ENCODE measurements at regions of chr1 and their contacts with region 1.

Region 1: GRCh38 chr1:115138968-115139367 is 49.7 kb upstream of the TSPAN2 start:
- DNase-seq: peak; percentile 66
- H3K4me3 ChIP-seq: no peak overlapping the region
- H3K27ac ChIP-seq: no peak overlapping the region
- H3K4me1 ChIP-seq: peaks cover 45% of the 10 kb centered on the region
- H3K27me3 ChIP-seq: no peaks in the 10 kb centered on the region
- CTCF ChIP-seq: peak; percentile 93 to 98 (median 94)

Region 2: DNA sequence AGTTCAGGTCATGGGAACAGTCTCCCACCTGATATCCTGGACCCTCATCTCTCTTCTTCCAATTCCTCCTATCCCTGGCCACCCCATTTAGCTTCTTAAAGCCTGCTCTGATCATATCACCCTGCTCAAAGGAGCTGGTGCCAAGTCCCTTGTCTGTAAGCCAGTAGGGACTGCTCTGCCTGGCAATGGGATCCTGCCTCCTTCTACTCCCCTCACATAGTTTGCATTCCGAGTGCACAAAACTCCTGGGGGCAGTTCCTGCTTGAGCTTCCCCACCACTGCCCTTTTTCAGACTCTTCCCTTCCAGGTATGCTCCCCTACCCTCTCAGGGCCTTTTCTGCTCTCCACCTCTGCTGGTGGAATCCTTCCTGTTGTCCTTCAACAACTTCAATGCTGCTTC is 151.0 kb after region 1 on chr1:
- dilution Hi-C with region 1: no loop called
- DNase-seq: no peak
- H3K4me3 ChIP-seq: no peak overlapping the region
- H3K27ac ChIP-seq: no peak overlapping the region
- H3K4me1 ChIP-seq: peaks cover 19% of the 10 kb centered on the region
- H3K27me3 ChIP-seq: no peaks in the 10 kb centered on the region
- CTCF ChIP-seq: no peak

Region 3: DNA sequence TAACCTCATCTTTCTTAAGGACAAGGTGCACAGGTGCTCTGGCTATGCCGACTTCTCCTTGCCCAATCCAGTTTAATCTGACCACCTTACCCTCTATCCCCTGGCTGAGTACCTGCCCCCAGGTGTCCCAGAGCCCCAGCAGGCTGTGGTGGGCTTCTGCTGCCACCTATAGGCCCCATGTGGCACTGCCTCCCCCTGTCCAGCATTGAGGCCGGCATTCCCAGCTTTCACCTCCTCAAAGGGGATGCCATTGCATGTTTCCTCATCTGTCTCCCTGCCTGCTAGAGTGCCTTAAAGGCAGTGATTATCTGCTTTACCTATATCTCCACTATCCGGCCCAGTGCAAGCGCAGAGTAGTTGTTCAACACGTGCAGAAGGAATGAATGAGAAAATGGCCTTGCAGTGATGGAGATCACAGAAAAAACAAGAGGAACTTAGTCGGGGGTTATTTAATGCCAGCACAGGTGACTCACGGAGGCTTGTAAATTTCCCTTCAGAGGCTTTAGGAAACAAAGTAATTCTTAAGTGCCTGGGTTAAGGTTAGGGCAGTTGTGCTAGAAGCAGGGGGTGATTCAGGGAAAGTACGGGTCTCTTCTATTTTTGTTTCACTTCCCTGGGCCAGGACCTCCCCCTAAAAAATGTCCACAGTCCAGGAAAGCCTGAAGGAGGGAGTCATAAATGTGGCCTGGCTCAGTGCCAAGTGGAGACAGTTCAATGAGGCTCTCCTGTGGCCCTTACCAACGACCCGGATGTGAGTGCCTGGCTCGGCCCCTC is 330.9 kb after region 1 on chr1:
- dilution Hi-C with region 1: loop called (anchors 25 kb)
- DNase-seq: peak; percentile 46
- H3K4me3 ChIP-seq: no peak overlapping the region
- H3K27ac ChIP-seq: no peak overlapping the region
- H3K4me1 ChIP-seq: peaks cover 27% of the 10 kb centered on the region
- H3K27me3 ChIP-seq: no peaks in the 10 kb centered on the region
- CTCF ChIP-seq: peak; percentile 97 to 98 (median 98)

Region 4: GRCh38 chr1:115595279-115596079 is 456.5 kb after region 1 on chr1:
- dilution Hi-C with region 1: loop called (anchors 10 kb)
- DNase-seq: peak; percentile 62
- H3K4me3 ChIP-seq: no peak overlapping the region
- H3K27ac ChIP-seq: peak overlapping the region; percentile 8
- H3K4me1 ChIP-seq: peaks cover 5% of the 10 kb centered on the region
- H3K27me3 ChIP-seq: no peaks in the 10 kb centered on the region
- CTCF ChIP-seq: peak; percentile 95 to 98 (median 98)